Mammary epithelial cell (primary cell): ENCODE measurements at regions of chr19 and their contacts with region 1.

Region 1: GRCh38 chr19:23554558-23554957 is 132.5 kb downstream of the ZNF675 start:
- DNase-seq: peak; percentile 95
- H3K4me3 ChIP-seq: no peak overlapping the region
- H3K27ac ChIP-seq: peak overlapping the region; percentile 97
- H3K4me1 ChIP-seq: peaks cover 22% of the 10 kb centered on the region
- H3K27me3 ChIP-seq: no peaks in the 10 kb centered on the region
- CTCF ChIP-seq: no peak

Region 2: DNA sequence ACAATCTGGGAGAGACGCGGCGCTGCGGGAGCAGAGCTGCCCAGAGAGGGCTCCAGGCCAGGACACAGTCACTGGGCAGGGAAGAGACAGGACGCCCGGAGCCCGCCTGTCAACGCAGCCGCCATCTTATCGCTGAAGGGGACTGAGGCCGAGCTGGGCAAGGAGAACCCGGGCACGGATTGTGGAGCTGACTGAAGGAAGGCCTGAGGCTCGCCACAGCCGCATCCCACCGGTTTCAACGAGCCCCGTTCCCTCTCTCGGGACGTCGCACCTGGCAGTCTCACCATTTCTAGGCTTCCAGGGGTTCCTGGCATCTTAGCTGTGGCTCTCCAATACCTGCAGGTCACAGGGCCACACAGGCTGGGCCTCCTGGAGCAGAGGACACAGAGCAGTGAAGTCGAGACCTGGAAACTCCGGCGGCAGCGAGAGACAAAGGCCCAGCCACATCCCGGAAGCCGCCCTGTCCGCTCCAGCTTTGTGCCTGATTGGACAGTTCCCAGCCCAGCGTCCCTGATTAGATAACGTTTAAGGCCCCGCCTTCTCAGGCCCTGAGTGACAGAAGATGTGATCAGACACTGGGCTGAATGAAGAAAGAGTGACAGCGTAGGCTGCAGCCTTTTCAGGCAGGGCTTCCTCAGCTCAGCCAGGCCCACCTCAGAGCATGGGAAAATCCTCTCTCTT is 159.4 kb before region 1 on chr19 and contains the start of gene ZNF91:
- CTCF ChIA-PET with region 1: no interaction called
- dilution Hi-C with region 1: no loop called
- in situ Hi-C with region 1: no loop called
- intact Hi-C with region 1: loop called (anchors 2 kb)
- DNase-seq: peak; percentile 97
- H3K4me3 ChIP-seq: peak within 1 kb of the TSS; percentile 69 to 75 (median 75)
- H3K27ac ChIP-seq: peak within 1 kb of the TSS; percentile 82
- H3K4me1 ChIP-seq: no peaks in the 10 kb centered on the region
- H3K27me3 ChIP-seq: no peaks in the 10 kb centered on the region
- CTCF ChIP-seq: no peak
- total RNA-seq, gene ZNF91: 27.8 to 43.7 TPM

Region 3: GRCh38 chr19:23481043-23481442 is 73.5 kb before region 1 on chr19:
- CTCF ChIA-PET with region 1: no interaction called
- dilution Hi-C with region 1: no loop called
- in situ Hi-C with region 1: no loop called
- intact Hi-C with region 1: loop called (anchors 1 kb)
- DNase-seq: peak; percentile 91
- H3K4me3 ChIP-seq: no peak overlapping the region
- H3K27ac ChIP-seq: no peak overlapping the region
- H3K4me1 ChIP-seq: peaks cover 4% of the 10 kb centered on the region
- H3K27me3 ChIP-seq: no peaks in the 10 kb centered on the region
- CTCF ChIP-seq: no peak

Region 4: DNA sequence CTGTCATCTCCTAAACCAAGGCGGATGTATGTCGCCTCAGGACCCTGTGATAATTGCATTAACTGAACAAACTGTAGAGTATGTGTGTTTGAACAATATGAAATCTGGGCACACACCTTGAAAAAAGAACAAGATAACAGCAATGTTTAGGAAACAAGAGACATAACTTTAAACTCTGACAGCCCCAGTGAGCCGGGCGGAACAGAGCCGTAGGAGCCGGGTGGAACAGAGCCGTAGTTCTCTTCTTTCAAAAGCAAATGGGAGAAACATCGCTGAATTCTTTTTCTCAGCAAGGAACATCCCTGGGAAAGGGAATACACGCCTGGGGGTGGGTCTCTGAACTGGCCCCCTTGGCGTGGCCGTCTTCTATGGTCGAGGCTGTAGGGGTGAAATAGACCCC is 164.2 kb after region 1 on chr19:
- CTCF ChIA-PET with region 1: no interaction called
- dilution Hi-C with region 1: no loop called
- in situ Hi-C with region 1: no loop called
- intact Hi-C with region 1: no loop called
- DNase-seq: no peak
- H3K4me3 ChIP-seq: no peak overlapping the region
- H3K27ac ChIP-seq: no peak overlapping the region
- H3K4me1 ChIP-seq: no peaks in the 10 kb centered on the region
- H3K27me3 ChIP-seq: no peaks in the 10 kb centered on the region
- CTCF ChIP-seq: no peak